Psoas muscle (tissue), 8 donors: ENCODE measurements at regions of chr2 and their contacts with region 1.

Region 1: DNA sequence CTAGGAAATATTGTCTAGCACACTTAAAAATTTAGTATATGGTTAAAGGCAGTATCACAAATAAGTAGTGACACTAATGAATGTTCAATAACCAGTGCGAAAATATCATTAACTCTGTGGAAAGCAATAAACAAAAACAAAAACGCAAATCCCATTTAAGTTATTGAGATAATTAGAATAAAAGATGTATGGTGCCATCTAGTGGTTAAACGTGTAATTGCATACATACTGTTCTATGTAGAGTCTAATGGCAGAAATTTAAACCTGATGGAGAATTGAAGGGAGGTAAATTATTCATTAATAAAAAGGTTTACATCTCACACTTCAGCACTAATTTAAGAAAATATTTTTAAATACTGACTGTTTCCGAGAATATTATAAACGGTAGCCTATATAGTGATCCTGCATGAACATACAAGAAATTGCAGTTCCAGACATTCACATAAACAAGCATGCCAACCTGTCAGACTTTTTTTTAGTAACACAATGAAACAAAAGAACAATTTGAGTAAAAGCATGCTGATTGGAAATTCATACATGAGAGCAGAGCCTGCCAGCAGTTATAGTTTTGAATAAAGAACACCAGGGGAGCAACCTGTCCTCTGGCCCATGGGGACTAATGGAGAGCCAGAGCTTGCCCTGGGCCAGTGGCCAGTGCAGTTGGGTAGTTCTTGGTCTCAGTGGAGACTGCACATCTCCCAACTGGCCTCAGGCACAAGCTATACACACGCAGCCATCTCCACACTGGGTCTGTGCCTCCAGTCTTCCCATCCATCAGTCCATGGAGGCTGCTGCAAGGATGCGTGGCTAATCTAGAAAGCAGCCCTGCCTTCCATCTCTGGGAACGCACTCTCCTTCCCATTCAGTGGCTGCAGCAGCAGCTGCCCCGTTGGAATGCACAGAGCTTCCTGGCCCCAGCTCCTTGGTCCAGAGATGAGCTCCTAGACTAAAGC is 28.0 kb downstream of the GCG start:
- DNase-seq: no peak
- ATAC-seq: peak in 2 of 4 donors; percentile 57 to 72
- H3K4me3 ChIP-seq: no peak overlapping the region
- H3K27ac ChIP-seq: no peak overlapping the region
- H3K4me1 ChIP-seq: no peaks in the 10 kb centered on the region
- H3K27me3 ChIP-seq: no peaks in the 10 kb centered on the region
- CTCF ChIP-seq: peak; percentile 91

Region 2: GRCh38 chr2:161190050-161190449 is 934.0 kb before region 1 on chr2:
- intact Hi-C with region 1: no loop called
- DNase-seq: no peak
- ATAC-seq: no peak
- H3K4me3 ChIP-seq: no peak overlapping the region
- H3K27ac ChIP-seq: no peak overlapping the region
- H3K4me1 ChIP-seq: peaks cover 17% of the 10 kb centered on the region
- H3K27me3 ChIP-seq: no peaks in the 10 kb centered on the region
- CTCF ChIP-seq: no peak

Region 3: GRCh38 chr2:161586517-161587167 is 537.4 kb before region 1 on chr2:
- intact Hi-C with region 1: loop called in 1 of 2 experiments (anchors 5 kb)
- DNase-seq: no peak
- ATAC-seq: no peak
- H3K4me3 ChIP-seq: no peak overlapping the region
- H3K27ac ChIP-seq: no peak overlapping the region
- H3K4me1 ChIP-seq: no peaks in the 10 kb centered on the region
- H3K27me3 ChIP-seq: peaks cover 0 to 3% (median 0%) of the 10 kb centered on the region in 3 donors
- CTCF ChIP-seq: peak; percentile 42

Region 4: DNA sequence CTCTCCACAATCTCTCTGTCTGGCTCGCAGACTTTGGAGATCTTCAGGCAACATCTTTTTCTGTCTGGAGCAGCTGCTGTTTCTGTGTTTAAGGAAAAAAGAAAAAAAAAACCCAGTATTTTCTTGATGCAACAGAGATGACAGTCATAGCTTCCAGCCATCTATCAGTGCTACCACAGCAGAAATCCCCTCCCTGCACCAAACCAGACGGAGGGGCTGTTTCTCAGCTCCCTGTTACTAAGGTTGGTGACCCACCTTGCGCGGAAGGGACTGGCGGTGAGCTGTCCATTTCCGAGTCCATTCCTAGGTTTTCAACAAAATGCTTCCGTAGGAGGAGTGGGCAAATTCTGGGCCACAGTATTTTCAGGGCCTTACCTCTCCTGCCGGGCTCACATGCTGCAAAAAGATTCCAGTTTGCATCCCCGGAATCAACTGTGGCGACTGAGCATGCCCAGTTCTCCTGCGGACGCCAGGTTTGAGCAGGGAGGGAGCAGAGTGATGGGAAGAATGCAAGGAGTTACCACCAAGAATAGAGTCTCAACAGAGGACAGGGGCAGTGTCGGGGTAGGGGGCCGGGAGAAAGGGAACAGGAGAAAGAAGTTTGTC is 498.7 kb before region 1 on chr2:
- intact Hi-C with region 1: no loop called
- DNase-seq: no peak
- ATAC-seq: no peak
- H3K4me3 ChIP-seq: no peak overlapping the region
- H3K27ac ChIP-seq: no peak overlapping the region
- H3K4me1 ChIP-seq: no peaks in the 10 kb centered on the region
- H3K27me3 ChIP-seq: peaks cover 0 to 9% (median 0%) of the 10 kb centered on the region in 3 donors
- CTCF ChIP-seq: no peak

Region 5: GRCh38 chr2:162007447-162008040 is 116.5 kb before region 1 on chr2:
- intact Hi-C with region 1: loop called (anchors 2 to 5 kb)
- DNase-seq: no peak
- ATAC-seq: no peak
- H3K4me3 ChIP-seq: no peak overlapping the region
- H3K27ac ChIP-seq: no peak overlapping the region
- H3K4me1 ChIP-seq: no peaks in the 10 kb centered on the region
- H3K27me3 ChIP-seq: no peaks in the 10 kb centered on the region
- CTCF ChIP-seq: peak; percentile 77

Region 6: DNA sequence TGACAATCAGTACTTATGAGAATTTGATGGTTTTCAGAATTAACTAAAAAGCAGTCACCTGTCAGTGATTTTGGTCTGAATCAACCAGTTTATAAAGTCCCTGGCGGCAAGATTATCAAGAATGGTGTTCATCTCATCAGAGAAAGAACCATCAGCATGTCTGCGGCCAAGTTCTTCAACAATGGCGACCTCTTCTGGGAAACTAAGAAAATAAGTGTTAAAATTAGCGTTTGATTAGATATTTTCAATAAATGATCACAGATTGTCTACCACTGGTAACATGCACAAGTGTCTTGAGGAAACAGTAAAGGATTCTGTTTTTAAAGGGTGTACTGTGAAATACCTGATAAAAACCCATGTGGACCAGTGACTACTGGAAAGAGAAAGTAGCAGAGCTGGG is 19.9 kb after region 1 on chr2:
- intact Hi-C with region 1: loop called in 1 of 2 experiments (anchors 1 kb)
- DNase-seq: no peak
- ATAC-seq: no peak
- H3K4me3 ChIP-seq: no peak overlapping the region
- H3K27ac ChIP-seq: no peak overlapping the region
- H3K4me1 ChIP-seq: no peaks in the 10 kb centered on the region
- H3K27me3 ChIP-seq: no peaks in the 10 kb centered on the region
- CTCF ChIP-seq: no peak

Region 7: GRCh38 chr2:162243294-162243693 is 119.2 kb after region 1 on chr2 and contains the start of gene FAP:
- intact Hi-C with region 1: no loop called
- DNase-seq: no peak
- ATAC-seq: peak in 3 of 4 donors; percentile 36 to 62 (median 59)
- H3K4me3 ChIP-seq: peak within 1 kb of the TSS; percentile 40
- H3K27ac ChIP-seq: peak within 1 kb of the TSS; percentile 9
- H3K4me1 ChIP-seq: peaks cover 5% of the 10 kb centered on the region
- H3K27me3 ChIP-seq: no peaks in the 10 kb centered on the region
- CTCF ChIP-seq: no peak
- total RNA-seq, gene FAP: 1.6 to 7.5 (median 3.2) TPM